Heart left ventricle (tissue), 16 donors: ENCODE measurements at regions of chr6 and their contacts with region 1.

Region 1: GRCh38 chr6:56393615-56394612 is 146.5 kb upstream of the COL21A1 start:
- DNase-seq: no peak
- ATAC-seq: no peak
- H3K4me3 ChIP-seq: no peak overlapping the region
- H3K27ac ChIP-seq: no peak overlapping the region
- H3K4me1 ChIP-seq: peaks cover 0 to 1% (median 0%) of the 10 kb centered on the region in 12 donors
- H3K27me3 ChIP-seq: no peaks in the 10 kb centered on the region
- CTCF ChIP-seq: no peak
- POLR2A ChIP-seq: no peak

Region 2: GRCh38 chr6:56324396-56324795 is 69.5 kb before region 1 on chr6:
- intact Hi-C with region 1: no loop called
- DNase-seq: no peak
- ATAC-seq: no peak
- H3K4me3 ChIP-seq: no peak overlapping the region
- H3K27ac ChIP-seq: no peak overlapping the region
- H3K4me1 ChIP-seq: peaks cover 0 to 2% (median 0%) of the 10 kb centered on the region in 12 donors
- H3K27me3 ChIP-seq: no peaks in the 10 kb centered on the region
- CTCF ChIP-seq: no peak
- POLR2A ChIP-seq: no peak

Region 3: DNA sequence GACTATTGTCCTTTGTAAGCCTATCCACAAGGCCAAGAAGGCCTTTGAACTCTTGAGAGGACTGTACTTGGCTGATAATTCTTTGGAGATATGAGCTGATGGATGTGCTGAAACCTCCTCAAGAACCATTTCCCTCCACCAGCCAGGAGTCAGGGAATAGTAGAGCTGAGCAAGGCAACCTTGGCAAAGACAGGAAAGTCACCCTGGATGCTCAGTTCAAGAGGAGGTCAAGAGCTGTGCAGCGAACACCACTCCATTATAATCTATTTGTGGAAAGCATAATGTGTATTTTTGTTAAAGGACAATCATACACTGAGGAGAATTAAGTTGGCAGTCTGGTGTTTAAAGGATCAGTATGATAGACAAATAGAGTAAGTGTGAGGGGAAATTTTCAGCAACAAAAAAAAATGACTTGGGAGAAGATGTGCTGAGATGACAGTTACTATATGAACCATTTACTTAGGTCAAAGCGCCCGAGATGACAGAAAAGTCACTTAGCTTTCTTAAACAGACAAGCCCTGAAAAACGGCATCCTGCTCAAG is 30.7 kb after region 1 on chr6:
- intact Hi-C with region 1: loop called in 1 of 10 experiments (anchors 5 kb)
- DNase-seq: peak in 1 of 5 donors; percentile 44
- ATAC-seq: peak; percentile 62 to 93 (median 78)
- H3K4me3 ChIP-seq: no peak overlapping the region
- H3K27ac ChIP-seq: no peak overlapping the region
- H3K4me1 ChIP-seq: peaks cover 0 to 13% (median 0%) of the 10 kb centered on the region in 12 donors
- H3K27me3 ChIP-seq: no peaks in the 10 kb centered on the region
- CTCF ChIP-seq: no peak
- POLR2A ChIP-seq: no peak